ENCODE measurements at regions of chr15 and their contacts with region 1.

Region 1: GRCh38 chr15:63519548-63520178 is 15.3 kb downstream of the USP3 start:
- DNase-seq: no peak
- ATAC-seq: no peak
- H3K4me3 ChIP-seq: no peak overlapping the region
- H3K4me3 Mint-ChIP-seq: peak overlapping the region in 2 of 3 donors; percentile 13 to 54
- H3K27ac ChIP-seq: no peak overlapping the region
- H3K27ac Mint-ChIP-seq: no peak overlapping the region
- H3K4me1 ChIP-seq: peaks cover 43 to 50% of the 10 kb centered on the region in 2 experiments
- H3K4me1 Mint-ChIP-seq: peaks cover 95 to 99% (median 96%) of the 10 kb centered on the region in 3 donors
- H3K27me3 ChIP-seq: no peaks in the 10 kb centered on the region
- H3K27me3 Mint-ChIP-seq: no peaks in the 10 kb centered on the region

Region 2: GRCh38 chr15:63504247-63504978 is 15.2 kb before region 1 on chr15 and contains the start of gene USP3:
- CTCF ChIA-PET with region 1: interaction called, 3 to 9 read pairs
- POLR2A ChIA-PET with region 1: interaction called, 4 to 16 read pairs
- DNase-seq: peak; percentile 84 to 96 (median 91)
- ATAC-seq: peak; percentile 71 to 85 (median 75)
- H3K4me3 ChIP-seq: peak within 1 kb of the TSS; percentile 84 to 99
- H3K4me3 Mint-ChIP-seq: peak within 1 kb of the TSS; percentile 94 to 99 (median 96)
- H3K27ac ChIP-seq: peak within 1 kb of the TSS; percentile 99
- H3K27ac Mint-ChIP-seq: peak within 1 kb of the TSS; percentile 99
- H3K4me1 ChIP-seq: peaks cover 43 to 69% of the 10 kb centered on the region in 2 experiments
- H3K4me1 Mint-ChIP-seq: peaks cover 74 to 75% (median 75%) of the 10 kb centered on the region in 3 donors
- H3K27me3 ChIP-seq: no peaks in the 10 kb centered on the region
- H3K27me3 Mint-ChIP-seq: no peaks in the 10 kb centered on the region
- total RNA-seq, gene USP3: 123 to 265 (median 130) TPM

Region 3: DNA sequence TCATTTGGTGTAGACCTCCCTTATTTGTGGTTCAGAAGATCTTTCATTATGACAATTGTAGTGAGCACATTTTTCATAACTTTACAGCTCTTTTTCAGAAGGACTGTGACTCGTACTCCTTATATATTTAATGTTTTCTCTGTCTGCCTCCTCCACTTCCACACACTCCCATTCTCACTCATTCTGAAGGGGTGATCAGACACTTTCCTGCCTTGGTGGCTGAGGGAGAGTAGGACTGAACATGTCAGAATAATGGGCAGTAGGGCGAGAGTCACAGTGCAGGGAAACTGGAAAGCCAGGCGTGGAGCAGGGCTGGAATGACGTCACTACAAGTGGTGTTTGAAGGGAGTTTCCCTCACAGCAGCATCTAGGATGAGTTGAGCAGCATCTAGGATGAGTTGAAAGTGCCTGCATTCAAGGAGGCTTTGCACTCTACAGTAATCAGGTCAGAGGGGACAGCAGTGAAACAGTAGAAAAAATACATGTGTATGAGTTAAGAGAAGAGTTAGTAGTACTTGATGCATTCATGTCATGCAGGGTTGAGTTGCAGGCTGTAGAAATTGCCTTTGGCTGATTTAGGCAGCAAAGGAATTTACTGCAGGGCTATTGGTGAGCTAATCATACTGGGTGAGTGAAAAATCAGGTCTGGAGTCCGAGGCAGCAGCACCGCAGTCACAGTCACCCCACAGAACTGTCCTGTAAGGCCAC is 41.2 kb after region 1 on chr15:
- CTCF ChIA-PET with region 1: no interaction called
- POLR2A ChIA-PET with region 1: no interaction called
- DNase-seq: peak in 1 of 35 experiments; percentile 50
- ATAC-seq: peak in 1 of 4 experiments; percentile 25
- H3K4me3 ChIP-seq: no peak overlapping the region
- H3K4me3 Mint-ChIP-seq: no peak overlapping the region
- H3K27ac ChIP-seq: peak overlapping the region; percentile 2
- H3K27ac Mint-ChIP-seq: peak overlapping the region; percentile 17 to 60
- H3K4me1 ChIP-seq: peaks cover 2 to 3% of the 10 kb centered on the region in 2 experiments
- H3K4me1 Mint-ChIP-seq: peaks cover 20 to 35% (median 20%) of the 10 kb centered on the region in 3 donors
- H3K27me3 ChIP-seq: no peaks in the 10 kb centered on the region
- H3K27me3 Mint-ChIP-seq: no peaks in the 10 kb centered on the region